Motor neuron (in vitro differentiated cells): ENCODE measurements at regions of chr9 and their contacts with region 1.

Region 1: DNA sequence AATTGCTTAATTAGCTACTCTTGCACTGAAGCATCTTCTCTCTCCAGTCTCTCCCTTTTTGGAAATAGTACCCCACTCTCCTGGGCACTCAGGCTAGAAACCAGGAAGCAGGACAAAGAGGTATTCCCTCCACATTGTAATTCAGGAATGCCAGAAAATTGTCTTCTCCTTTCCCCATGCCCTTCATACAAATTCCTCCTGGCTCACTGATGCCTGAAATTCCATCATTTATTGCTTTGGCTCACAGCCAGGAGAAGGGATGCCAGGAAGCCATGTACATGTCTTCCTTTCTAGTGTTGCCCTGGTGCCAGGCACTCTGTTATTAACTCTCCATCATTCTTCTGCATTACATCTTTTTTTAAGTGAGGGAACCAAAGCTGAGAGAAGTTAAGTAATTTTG is 716.5 kb upstream of the C9orf72 start:
- ATAC-seq: peak in 2 of 8 experiments; percentile 32 to 78
- H3K4me3 ChIP-seq: no peak overlapping the region
- H3K27ac ChIP-seq: no peak overlapping the region
- H3K4me1 ChIP-seq: peaks cover 0 to 19% of the 10 kb centered on the region in 2 donors

Region 2: DNA sequence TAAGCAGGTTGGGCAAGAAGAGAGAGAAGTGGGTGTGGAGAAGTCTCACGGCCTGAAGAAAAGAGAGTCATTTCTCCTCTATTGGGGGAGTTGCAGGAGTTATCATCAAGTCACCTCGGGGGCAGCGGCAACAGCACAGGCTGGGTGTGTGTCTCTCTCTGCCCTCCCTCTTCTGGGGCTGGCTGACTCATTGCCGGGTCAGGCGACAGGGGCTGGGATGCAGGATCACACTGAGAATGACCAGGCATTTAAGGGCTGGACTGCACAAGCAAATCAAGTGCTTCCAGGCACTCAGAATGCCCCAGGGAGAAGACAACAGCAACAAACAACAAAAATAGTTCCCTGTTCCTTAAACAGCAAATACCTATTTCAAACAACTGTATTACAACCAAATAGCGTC is 986.5 kb before region 1 on chr9:
- in situ Hi-C with region 1: no loop called
- ATAC-seq: peak; percentile 40 to 99 (median 80)
- H3K4me3 ChIP-seq: no peak overlapping the region
- H3K27ac ChIP-seq: no peak overlapping the region
- H3K4me1 ChIP-seq: no peaks in the 10 kb centered on the region

Region 3: GRCh38 chr9:28378231-28378630 is 88.5 kb after region 1 on chr9:
- in situ Hi-C with region 1: loop called in 1 of 9 experiments (anchors 25 kb)
- ATAC-seq: no peak
- H3K4me3 ChIP-seq: no peak overlapping the region
- H3K27ac ChIP-seq: no peak overlapping the region
- H3K4me1 ChIP-seq: no peaks in the 10 kb centered on the region